ENCODE measurements at regions of chr1 and their contacts with region 1.

Region 1: DNA sequence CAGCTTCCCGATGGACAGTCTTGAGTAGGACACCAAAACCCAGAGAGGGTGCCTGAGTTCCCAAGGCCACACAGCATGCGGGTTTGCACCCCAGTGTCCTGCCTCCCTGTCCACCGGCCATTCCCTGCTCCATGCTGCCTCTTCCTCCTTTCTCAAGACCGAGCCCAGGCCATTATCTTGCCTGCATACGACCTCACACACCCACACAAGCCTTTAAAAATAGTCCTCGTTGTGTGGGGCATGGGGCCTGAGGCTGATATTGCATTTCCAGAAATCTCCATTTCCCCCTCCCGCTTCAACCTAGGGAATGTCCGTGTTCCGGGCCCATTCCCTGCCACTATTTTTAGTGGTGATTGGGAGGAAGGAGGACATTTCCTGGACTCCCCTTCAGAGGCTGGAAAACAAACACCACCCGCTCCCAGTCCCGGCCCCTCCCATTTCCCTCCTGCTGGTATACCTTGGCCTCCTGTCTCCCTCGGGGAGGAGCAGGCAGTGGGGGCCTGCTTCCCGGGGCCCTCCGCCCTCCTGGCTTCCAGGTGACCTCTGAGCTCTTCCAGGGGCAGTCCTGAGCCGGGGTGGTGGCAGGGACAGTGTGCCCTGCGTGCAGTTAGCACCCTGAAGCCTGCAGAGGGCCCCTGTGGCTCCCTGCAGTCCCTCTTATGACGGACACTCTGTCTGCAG is 132.3 kb upstream of the TMEM51 start:
- DNase-seq: peak in 1 of 4 donors; percentile 50
- ATAC-seq: peak; percentile 14
- H3K4me3 ChIP-seq: no peak overlapping the region
- H3K27ac ChIP-seq: no peak overlapping the region
- H3K4me1 ChIP-seq: peaks cover 0 to 36% of the 10 kb centered on the region in 2 donors
- H3K27me3 ChIP-seq: no peaks in the 10 kb centered on the region
- CTCF ChIP-seq: no peak

Region 2: GRCh38 chr1:14924455-14925331 is 96.5 kb before region 1 on chr1:
- intact Hi-C with region 1: loop called in 1 of 2 experiments (anchors 5 kb)
- DNase-seq: peak in 2 of 4 donors; percentile 48 to 89
- ATAC-seq: peak; percentile 77
- H3K4me3 ChIP-seq: peak overlapping the region; percentile 52 to 68
- H3K27ac ChIP-seq: peak overlapping the region; percentile 46 to 48
- H3K4me1 ChIP-seq: peaks cover 16 to 23% of the 10 kb centered on the region in 2 donors
- H3K27me3 ChIP-seq: peaks cover 0 to 47% of the 10 kb centered on the region in 2 donors
- CTCF ChIP-seq: no peak

Region 3: GRCh38 chr1:15627343-15627988 is 606.3 kb after region 1 on chr1:
- intact Hi-C with region 1: no loop called
- DNase-seq: peak in 2 of 4 donors; percentile 70 to 71
- ATAC-seq: peak; percentile 45
- H3K4me3 ChIP-seq: no peak overlapping the region
- H3K27ac ChIP-seq: no peak overlapping the region
- H3K4me1 ChIP-seq: peaks cover 7 to 42% of the 10 kb centered on the region in 2 donors
- H3K27me3 ChIP-seq: no peaks in the 10 kb centered on the region
- CTCF ChIP-seq: no peak